ENCODE measurements at regions of chr9 and their contacts with region 1.

Region 1: DNA sequence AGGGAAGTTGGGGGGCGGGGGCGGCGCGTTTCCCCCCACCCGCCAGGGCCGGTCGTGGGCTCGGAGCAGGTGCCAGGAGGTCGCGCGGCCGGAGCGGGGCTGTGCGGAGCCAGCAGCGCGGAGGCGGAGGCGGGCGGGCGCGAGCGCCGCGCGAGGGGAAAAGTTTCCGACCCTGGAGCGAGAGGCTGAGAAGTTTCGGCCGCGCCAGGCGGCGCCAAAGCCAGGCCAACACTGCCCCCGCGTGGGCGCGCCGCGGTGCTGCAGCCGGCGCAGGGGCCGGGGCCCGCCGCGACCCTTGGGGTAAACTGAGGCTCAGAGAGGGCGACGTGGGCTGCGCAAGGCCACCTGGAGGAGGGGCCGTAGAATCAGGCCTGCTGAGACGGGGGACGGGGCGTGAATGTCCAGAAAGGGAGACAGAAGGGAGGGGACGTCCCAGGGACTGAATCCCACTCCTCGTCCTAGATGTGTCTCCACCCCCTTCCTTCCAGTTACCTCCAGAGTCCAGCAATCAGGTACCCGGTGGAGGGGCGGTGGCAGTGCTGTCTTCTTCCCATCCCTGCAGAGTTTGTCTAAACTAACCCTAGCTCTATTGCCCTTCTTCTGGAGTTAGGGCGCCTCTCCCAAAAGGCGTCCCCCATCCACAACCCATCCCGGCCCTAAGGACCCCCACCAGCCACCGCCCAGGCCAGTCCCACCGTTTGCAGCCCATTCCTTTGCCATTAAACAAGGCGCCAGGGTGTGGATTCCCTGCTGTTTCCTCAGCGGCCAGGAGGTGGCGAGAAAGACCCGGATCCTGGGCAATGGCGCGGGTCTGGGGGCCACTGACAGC is 10.2 kb downstream of the C9orf50 start:
- DNase-seq: no peak
- H3K4me3 ChIP-seq: peak overlapping the region; percentile 66
- CTCF ChIP-seq: peak; percentile 86

Region 2: GRCh38 chr9:129125476-129125875 is 485.2 kb before region 1 on chr9:
- CTCF ChIA-PET with region 1: interaction called, 286 read pairs
- POLR2A ChIA-PET with region 1: no interaction called
- DNase-seq: no peak
- H3K4me3 ChIP-seq: no peak overlapping the region
- CTCF ChIP-seq: no peak

Region 3: GRCh38 chr9:129131300-129132145 is 479.2 kb before region 1 on chr9:
- CTCF ChIA-PET with region 1: interaction called, 286 read pairs
- POLR2A ChIA-PET with region 1: interaction called, 4 read pairs
- DNase-seq: no peak
- H3K4me3 ChIP-seq: no peak overlapping the region
- CTCF ChIP-seq: peak; percentile 99

Region 4: GRCh38 chr9:129172802-129173201 is 437.9 kb before region 1 on chr9:
- CTCF ChIA-PET with region 1: interaction called, 16 read pairs
- POLR2A ChIA-PET with region 1: interaction called, 17 read pairs
- DNase-seq: no peak
- H3K4me3 ChIP-seq: no peak overlapping the region
- CTCF ChIP-seq: no peak

Region 5: DNA sequence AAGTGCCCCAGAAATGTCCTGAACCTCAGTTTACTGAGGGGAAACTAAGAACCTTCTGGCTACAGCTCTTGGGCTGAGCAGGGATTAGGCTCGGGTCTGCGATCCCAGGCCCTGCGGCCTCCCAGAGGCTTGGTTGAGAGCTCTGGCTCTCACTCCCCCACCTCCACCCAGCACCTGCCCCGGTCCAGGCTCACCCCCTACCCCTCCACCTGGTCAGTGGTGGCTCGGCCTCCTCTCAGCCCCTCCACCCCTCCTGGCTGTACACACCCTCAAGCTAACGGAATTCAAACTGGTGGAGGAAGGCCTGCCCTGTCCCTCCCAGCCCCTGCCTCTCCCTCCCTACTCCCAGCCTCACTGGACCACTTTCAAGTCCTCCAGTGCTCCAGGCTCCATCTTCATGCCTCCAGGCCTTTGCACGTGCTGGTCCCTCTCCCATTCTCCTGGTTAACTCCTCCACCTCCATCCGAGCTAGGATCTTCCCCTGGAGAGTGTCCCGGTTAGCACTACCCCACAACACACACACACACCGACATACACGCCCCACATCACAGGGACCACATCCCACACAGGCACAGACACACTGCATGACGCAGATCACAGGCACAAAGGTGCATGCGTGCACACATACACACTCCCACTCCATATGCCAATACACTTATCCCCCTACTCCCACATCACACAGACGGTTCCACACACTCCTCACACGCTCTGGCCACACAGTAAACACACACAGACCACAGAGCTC is 120.7 kb before region 1 on chr9:
- CTCF ChIA-PET with region 1: interaction called, 14 read pairs
- POLR2A ChIA-PET with region 1: interaction called, 3 read pairs
- DNase-seq: no peak
- H3K4me3 ChIP-seq: peak overlapping the region; percentile 52
- CTCF ChIP-seq: no peak

Measured in AG04449 (cell line).